Body of pancreas (tissue), 4 donors: ENCODE measurements at regions of chr17 and their contacts with region 1.

Region 1: DNA sequence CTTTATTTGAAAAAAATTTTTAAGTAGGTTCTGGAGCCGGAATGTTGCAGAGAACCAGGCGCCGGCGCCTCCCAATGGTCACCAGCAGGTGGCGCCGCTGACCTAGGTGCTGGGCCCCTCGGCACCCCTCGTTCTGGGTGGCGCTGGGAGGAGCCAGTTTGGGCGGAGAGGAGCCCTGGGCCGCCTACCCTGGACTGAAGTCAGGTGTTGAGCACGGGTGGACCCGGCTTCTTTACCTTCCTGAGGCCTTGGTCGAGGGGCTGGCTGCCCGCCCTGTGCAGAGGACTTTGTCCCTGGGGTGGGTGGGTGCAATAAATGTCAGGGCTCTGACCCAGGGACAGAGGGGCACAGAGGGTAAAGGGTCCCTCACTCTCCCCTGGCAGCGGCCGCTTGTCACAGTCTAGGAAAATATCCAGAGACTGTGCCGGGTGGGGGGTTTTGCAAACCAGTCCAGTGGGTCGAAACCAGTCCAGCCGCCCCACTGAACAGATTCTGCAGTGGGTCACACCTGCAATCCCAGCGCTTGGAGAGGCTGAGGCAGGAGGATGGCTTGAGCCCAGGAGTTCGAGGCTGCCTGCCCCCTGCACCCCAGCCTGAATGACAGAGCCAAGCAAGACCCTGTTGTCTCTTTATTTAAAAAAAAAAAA is 30.1 kb upstream of the TNFRSF13B start:
- DNase-seq: peak; percentile 84 to 91 (median 86)
- ATAC-seq: peak; percentile 91
- H3K4me3 ChIP-seq: no peak overlapping the region
- H3K27ac ChIP-seq: no peak overlapping the region
- H3K4me1 ChIP-seq: peaks cover 11% of the 10 kb centered on the region
- H3K27me3 ChIP-seq: no peaks in the 10 kb centered on the region
- CTCF ChIP-seq: peak; percentile 91 to 99 (median 96)
- POLR2A ChIP-seq: no peak

Region 2: GRCh38 chr17:17088526-17089525 is 86.8 kb after region 1 on chr17:
- intact Hi-C with region 1: no loop called
- DNase-seq: no peak
- ATAC-seq: no peak
- H3K4me3 ChIP-seq: no peak overlapping the region
- H3K27ac ChIP-seq: peak overlapping the region in 1 of 4 donors; percentile 10
- H3K4me1 ChIP-seq: peaks cover 35% of the 10 kb centered on the region
- H3K27me3 ChIP-seq: no peaks in the 10 kb centered on the region
- CTCF ChIP-seq: no peak
- POLR2A ChIP-seq: no peak

Region 3: GRCh38 chr17:17104494-17104893 is 102.5 kb after region 1 on chr17:
- intact Hi-C with region 1: no loop called
- DNase-seq: peak in 3 of 4 donors; percentile 42 to 52 (median 43)
- ATAC-seq: peak; percentile 72
- H3K4me3 ChIP-seq: no peak overlapping the region
- H3K27ac ChIP-seq: peak overlapping the region; percentile 29 to 68 (median 50)
- H3K4me1 ChIP-seq: peaks cover 32% of the 10 kb centered on the region
- H3K27me3 ChIP-seq: no peaks in the 10 kb centered on the region
- CTCF ChIP-seq: no peak
- POLR2A ChIP-seq: no peak

Region 4: GRCh38 chr17:17119533-17119932 is 117.5 kb after region 1 on chr17:
- intact Hi-C with region 1: loop called (anchors 10 kb)
- DNase-seq: peak in 3 of 4 donors; percentile 37 to 51 (median 44)
- ATAC-seq: peak; percentile 55
- H3K4me3 ChIP-seq: no peak overlapping the region
- H3K27ac ChIP-seq: peak overlapping the region; percentile 19 to 71 (median 58)
- H3K4me1 ChIP-seq: peaks cover 50% of the 10 kb centered on the region
- H3K27me3 ChIP-seq: no peaks in the 10 kb centered on the region
- CTCF ChIP-seq: no peak
- POLR2A ChIP-seq: no peak

Region 5: GRCh38 chr17:17206124-17206912 is 204.3 kb after region 1 on chr17 and contains the start of gene PLD6:
- intact Hi-C with region 1: loop called (anchors 10 kb)
- DNase-seq: peak; percentile 92 to 94 (median 92)
- ATAC-seq: peak; percentile 78
- H3K4me3 ChIP-seq: peak within 1 kb of the TSS; percentile 10 to 34
- H3K27ac ChIP-seq: peak within 1 kb of the TSS; percentile 86 to 91 (median 88)
- H3K4me1 ChIP-seq: peaks cover 34% of the 10 kb centered on the region
- H3K27me3 ChIP-seq: no peaks in the 10 kb centered on the region
- CTCF ChIP-seq: no peak
- POLR2A ChIP-seq: peak in 1 of 3 donors; percentile 42
- total RNA-seq, gene PLD6: 3.6 to 6.6 TPM

Region 6: DNA sequence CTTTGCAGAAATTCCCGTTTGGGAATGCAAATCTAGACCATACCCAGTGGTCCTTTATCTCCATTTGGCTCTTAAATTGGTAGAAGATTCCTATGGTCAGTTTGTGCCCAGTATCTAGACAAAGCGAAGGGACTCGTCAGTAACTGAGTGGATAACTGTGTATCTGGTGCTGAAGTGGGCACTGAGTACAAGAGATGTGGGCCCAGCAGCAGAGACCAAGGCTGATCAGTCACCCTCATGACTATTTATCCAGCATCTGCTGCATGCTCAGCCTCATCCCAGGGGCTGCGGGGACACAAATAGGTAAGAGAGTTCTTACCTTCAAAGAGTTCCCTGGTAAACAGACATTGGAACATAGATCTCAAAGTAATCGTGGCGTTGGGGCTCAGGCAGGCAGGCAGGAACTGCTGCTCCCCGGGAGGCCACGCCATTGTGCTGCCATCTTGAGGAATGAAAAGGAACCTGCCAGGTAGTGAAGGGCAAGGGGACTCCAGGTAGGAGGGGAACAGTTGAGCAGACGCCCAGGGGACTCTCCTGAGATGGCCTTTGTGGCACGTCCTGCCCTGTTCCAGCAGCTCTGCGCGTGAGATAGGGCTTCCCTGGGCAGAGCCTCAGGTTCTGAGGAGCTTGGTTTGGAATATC is 311.5 kb after region 1 on chr17:
- intact Hi-C with region 1: loop called (anchors 5 kb)
- DNase-seq: peak; percentile 68 to 76 (median 70)
- ATAC-seq: peak; percentile 90
- H3K4me3 ChIP-seq: no peak overlapping the region
- H3K27ac ChIP-seq: no peak overlapping the region
- H3K4me1 ChIP-seq: peaks cover 6% of the 10 kb centered on the region
- H3K27me3 ChIP-seq: no peaks in the 10 kb centered on the region
- CTCF ChIP-seq: peak; percentile 57 to 79 (median 71)
- POLR2A ChIP-seq: no peak